Mammary epithelial cell (primary cell): ENCODE measurements at regions of chr2 and their contacts with region 1.

Region 1: DNA sequence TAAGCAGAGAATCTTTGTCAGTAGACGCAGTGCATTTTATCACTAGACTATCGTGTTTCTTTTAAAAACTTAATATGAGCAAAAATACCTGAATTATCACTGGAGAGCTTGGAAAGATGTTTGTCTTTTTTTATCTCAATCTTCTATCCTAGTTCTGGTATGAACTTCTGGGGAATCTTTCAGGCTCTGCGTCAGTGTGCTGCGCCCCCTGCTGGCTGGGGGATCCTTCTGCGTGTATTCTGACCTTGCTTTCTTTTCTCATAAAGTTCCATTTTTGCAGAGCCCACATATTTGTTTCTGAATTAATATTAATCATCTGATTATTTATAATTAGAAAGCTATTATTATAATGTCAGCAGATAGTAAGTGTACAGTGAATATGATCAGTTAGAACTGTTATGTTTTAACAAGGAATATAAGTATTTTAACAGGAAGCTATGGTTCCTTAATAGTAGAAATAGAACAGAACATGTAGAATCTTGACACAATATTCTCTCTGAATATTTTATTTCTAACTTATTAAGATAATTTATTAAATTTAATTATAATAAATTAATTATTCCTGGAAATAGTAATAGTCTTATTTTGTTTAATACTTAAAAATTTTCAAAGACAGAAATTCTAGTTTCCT is 945.0 kb upstream of the CRIM1 start:
- DNase-seq: peak; percentile 12
- H3K4me3 ChIP-seq: no peak overlapping the region
- H3K27ac ChIP-seq: no peak overlapping the region
- H3K4me1 ChIP-seq: no peaks in the 10 kb centered on the region
- H3K27me3 ChIP-seq: no peaks in the 10 kb centered on the region
- CTCF ChIP-seq: peak; percentile 94 to 96

Region 2: DNA sequence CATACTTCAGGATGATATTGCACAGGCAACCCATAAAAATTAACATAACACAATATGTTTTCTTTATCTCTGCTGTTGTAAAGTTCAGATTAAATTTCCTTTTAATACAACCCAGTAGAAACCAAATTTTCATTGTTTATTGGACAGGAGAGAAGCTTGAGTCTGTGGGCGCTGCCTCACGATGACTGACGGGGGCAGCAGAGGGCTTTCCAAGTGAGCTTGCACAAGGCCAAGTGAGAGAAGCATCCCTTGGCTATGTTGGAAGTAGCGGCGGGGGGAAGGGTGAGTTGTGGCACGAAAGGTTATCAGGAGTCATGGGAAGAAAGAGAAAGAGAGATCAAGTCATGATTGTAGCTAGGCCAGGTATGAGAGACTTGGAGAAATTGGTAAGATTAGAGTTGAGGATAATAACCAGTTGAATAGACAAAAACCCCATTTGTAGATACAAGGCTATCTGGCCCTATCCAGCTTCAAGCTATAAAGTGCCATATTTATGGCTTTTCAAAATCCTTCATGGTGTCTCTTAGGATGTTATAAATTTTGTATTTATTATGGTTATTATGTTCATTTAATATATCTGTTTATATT is 1397.7 kb before region 1 on chr2:
- CTCF ChIA-PET with region 1: no interaction called
- dilution Hi-C with region 1: no loop called
- in situ Hi-C with region 1: no loop called
- intact Hi-C with region 1: loop called (anchors 2 kb)
- DNase-seq: peak; percentile 28
- H3K4me3 ChIP-seq: no peak overlapping the region
- H3K27ac ChIP-seq: no peak overlapping the region
- H3K4me1 ChIP-seq: no peaks in the 10 kb centered on the region
- H3K27me3 ChIP-seq: no peaks in the 10 kb centered on the region
- CTCF ChIP-seq: peak; percentile 78 to 83

Region 3: GRCh38 chr2:34096562-34097171 is 1313.9 kb before region 1 on chr2:
- CTCF ChIA-PET with region 1: no interaction called
- dilution Hi-C with region 1: no loop called
- in situ Hi-C with region 1: no loop called
- intact Hi-C with region 1: loop called (anchors 2 kb)
- DNase-seq: peak; percentile 47
- H3K4me3 ChIP-seq: no peak overlapping the region
- H3K27ac ChIP-seq: no peak overlapping the region
- H3K4me1 ChIP-seq: no peaks in the 10 kb centered on the region
- H3K27me3 ChIP-seq: no peaks in the 10 kb centered on the region
- CTCF ChIP-seq: peak; percentile 71 to 79

Region 4: DNA sequence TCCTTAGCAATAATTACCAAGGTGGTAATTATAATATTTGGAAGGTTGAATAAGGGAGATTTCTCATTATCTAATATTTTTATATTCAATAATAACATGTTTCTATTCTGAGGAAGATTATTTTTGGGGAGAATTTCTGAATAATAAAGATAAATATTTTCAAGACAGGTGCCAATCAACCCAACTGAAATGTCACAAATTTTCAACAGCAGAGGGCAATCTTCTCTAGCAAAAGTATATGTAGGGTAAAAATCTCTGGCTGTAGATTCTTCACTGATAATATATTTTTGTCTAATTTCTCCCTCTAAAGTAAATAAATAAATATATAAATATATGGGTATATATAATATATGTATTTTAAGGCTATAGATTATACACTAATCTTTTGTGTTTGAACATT is 242.2 kb before region 1 on chr2:
- CTCF ChIA-PET with region 1: no interaction called
- dilution Hi-C with region 1: no loop called
- in situ Hi-C with region 1: no loop called
- intact Hi-C with region 1: loop called (anchors 1 kb)
- DNase-seq: no peak
- H3K4me3 ChIP-seq: no peak overlapping the region
- H3K27ac ChIP-seq: no peak overlapping the region
- H3K4me1 ChIP-seq: no peaks in the 10 kb centered on the region
- H3K27me3 ChIP-seq: no peaks in the 10 kb centered on the region
- CTCF ChIP-seq: peak in 1 of 2 donors; percentile 32